ENCODE measurements at regions of chr6 and their contacts with region 1.

Region 1: GRCh38 chr6:24855395-24856245 is 56.9 kb upstream of the ARMH2 start:
- DNase-seq: peak; percentile 86
- ATAC-seq: peak; percentile 42
- H3K4me3 ChIP-seq: no peak overlapping the region
- H3K4me3 Mint-ChIP-seq: peak overlapping the region; percentile 46
- H3K27ac ChIP-seq: peak overlapping the region; percentile 60 to 80
- H3K27ac Mint-ChIP-seq: peak overlapping the region; percentile 97
- H3K4me1 ChIP-seq: peaks cover 62% of the 10 kb centered on the region in 2 donors
- H3K4me1 Mint-ChIP-seq: peaks cover 60% of the 10 kb centered on the region
- H3K27me3 ChIP-seq: no peaks in the 10 kb centered on the region
- H3K27me3 Mint-ChIP-seq: no peaks in the 10 kb centered on the region
- CTCF ChIP-seq: peak; percentile 86

Region 2: GRCh38 chr6:24666641-24667377 is 188.8 kb before region 1 on chr6 and contains the starts of genes ACOT13 and TDP2:
- CTCF ChIA-PET with region 1: no interaction called
- POLR2A ChIA-PET with region 1: no interaction called
- intact Hi-C with region 1: no loop called
- DNase-seq: peak; percentile 98
- ATAC-seq: peak; percentile 94
- H3K4me3 ChIP-seq: peak within 1 kb of the TSS; percentile 74 to 100 (median 96)
- H3K4me3 Mint-ChIP-seq: peak within 1 kb of the TSS; percentile 99
- H3K27ac ChIP-seq: peak within 1 kb of the TSS; percentile 75 to 82
- H3K27ac Mint-ChIP-seq: peak within 1 kb of the TSS; percentile 98
- H3K4me1 ChIP-seq: peaks cover 22 to 23% of the 10 kb centered on the region in 2 donors
- H3K4me1 Mint-ChIP-seq: peaks cover 46% of the 10 kb centered on the region
- H3K27me3 ChIP-seq: no peaks in the 10 kb centered on the region
- H3K27me3 Mint-ChIP-seq: no peaks in the 10 kb centered on the region
- CTCF ChIP-seq: peak; percentile 67
- total RNA-seq, gene ACOT13: 5.7 and 6.6 TPM in 2 replicates
- total RNA-seq, gene TDP2: 63.5 and 68.1 TPM in 2 replicates

Region 3: DNA sequence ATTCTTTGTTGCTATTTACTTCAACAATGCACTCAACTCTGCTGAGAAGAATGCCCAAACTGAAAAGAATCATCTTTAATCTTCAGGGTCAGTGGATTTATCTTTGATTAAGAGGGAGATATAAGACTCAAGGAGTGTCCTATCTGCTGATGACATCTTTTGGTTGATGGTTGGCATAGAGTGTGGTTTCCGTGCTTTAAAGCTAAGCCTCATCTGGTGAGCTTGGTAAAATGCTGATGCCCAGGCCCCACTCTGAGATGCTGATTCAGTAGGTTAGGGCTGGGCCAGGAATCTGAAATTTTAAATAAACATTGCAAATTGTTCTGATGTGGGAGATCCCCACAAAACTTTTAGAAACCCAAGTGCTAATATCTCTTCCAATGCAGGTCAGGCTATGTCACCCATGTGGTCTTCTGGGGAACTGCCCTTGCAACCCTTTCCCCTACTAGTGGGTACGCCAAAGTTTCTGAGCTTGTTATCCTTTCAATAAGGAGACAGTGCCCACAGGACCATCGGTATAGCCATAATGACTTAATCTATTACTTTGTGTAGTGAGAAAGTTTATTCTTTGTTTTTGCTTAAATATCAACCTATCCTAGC is 11.6 kb after region 1 on chr6:
- CTCF ChIA-PET with region 1: interaction called, 24 read pairs
- POLR2A ChIA-PET with region 1: no interaction called
- intact Hi-C with region 1: no loop called
- DNase-seq: no peak
- ATAC-seq: no peak
- H3K4me3 ChIP-seq: no peak overlapping the region
- H3K4me3 Mint-ChIP-seq: no peak overlapping the region
- H3K27ac ChIP-seq: peak overlapping the region in 1 of 2 donors; percentile 81
- H3K27ac Mint-ChIP-seq: peak overlapping the region; percentile 67
- H3K4me1 ChIP-seq: peaks cover 47 to 49% of the 10 kb centered on the region in 2 donors
- H3K4me1 Mint-ChIP-seq: peaks cover 58% of the 10 kb centered on the region
- H3K27me3 ChIP-seq: no peaks in the 10 kb centered on the region
- H3K27me3 Mint-ChIP-seq: no peaks in the 10 kb centered on the region
- CTCF ChIP-seq: no peak

Region 4: GRCh38 chr6:24891004-24891403 is 35.4 kb after region 1 on chr6:
- CTCF ChIA-PET with region 1: interaction called, 15 read pairs
- POLR2A ChIA-PET with region 1: no interaction called
- intact Hi-C with region 1: no loop called
- DNase-seq: no peak
- ATAC-seq: peak; percentile 28
- H3K4me3 ChIP-seq: no peak overlapping the region
- H3K4me3 Mint-ChIP-seq: peak overlapping the region; percentile 58
- H3K27ac ChIP-seq: peak overlapping the region in 1 of 2 donors; percentile 53
- H3K27ac Mint-ChIP-seq: peak overlapping the region; percentile 54
- H3K4me1 ChIP-seq: peaks cover 82 to 83% of the 10 kb centered on the region in 2 donors
- H3K4me1 Mint-ChIP-seq: peaks cover 88% of the 10 kb centered on the region
- H3K27me3 ChIP-seq: no peaks in the 10 kb centered on the region
- H3K27me3 Mint-ChIP-seq: no peaks in the 10 kb centered on the region
- CTCF ChIP-seq: no peak

Region 5: DNA sequence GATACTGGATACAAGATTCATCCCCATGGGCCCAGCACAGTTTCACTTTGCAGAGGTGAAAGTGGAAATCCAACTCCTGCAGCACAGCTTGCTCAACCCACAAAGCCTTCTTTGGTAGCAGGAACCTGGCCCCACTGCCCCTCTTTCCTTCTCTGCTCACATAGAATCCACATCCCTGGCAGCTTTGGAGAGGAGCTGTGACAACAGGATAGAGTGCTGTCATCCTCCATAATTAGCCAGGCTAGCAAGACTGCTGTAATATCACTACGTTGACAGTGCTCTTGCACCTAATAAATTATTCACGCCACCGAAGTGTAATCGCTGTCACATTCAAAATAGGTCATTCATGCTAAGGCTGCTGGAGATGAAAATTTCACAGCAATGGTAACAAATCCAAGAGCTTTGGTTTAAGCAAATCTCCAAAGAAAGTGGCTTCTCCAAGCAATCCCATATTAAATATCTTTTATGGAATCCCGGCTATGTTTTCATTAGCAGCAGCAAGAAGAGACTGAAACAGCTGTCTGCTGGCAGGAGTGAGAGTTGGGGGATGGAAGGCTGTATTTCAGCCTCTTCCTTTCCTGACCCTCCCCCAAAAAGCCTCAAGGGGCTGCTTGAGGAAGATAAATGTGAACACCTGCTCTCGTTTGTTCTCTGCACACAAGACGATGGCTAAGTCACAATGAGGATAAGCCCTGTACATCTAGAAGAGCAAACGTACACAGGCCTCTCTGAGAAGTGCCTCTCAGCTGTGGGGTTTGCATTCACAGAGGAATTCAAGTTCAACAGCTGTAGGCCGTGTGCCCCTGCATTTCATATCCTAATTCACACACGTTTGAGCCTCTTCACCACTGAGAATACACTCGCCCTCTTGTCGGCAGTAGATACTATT is 63.6 kb after region 1 on chr6:
- CTCF ChIA-PET with region 1: interaction called, 17 read pairs
- POLR2A ChIA-PET with region 1: no interaction called
- intact Hi-C with region 1: no loop called
- DNase-seq: peak; percentile 39
- ATAC-seq: peak; percentile 70
- H3K4me3 ChIP-seq: peak overlapping the region in 4 of 5 experiments; percentile 2 to 39 (median 16)
- H3K4me3 Mint-ChIP-seq: peak overlapping the region; percentile 84
- H3K27ac ChIP-seq: peak overlapping the region; percentile 36 to 68
- H3K27ac Mint-ChIP-seq: peak overlapping the region; percentile 92
- H3K4me1 ChIP-seq: peaks cover 95 to 99% of the 10 kb centered on the region in 2 donors
- H3K4me1 Mint-ChIP-seq: peaks cover 91% of the 10 kb centered on the region
- H3K27me3 ChIP-seq: no peaks in the 10 kb centered on the region
- H3K27me3 Mint-ChIP-seq: no peaks in the 10 kb centered on the region
- CTCF ChIP-seq: no peak

Region 6: GRCh38 chr6:25035527-25036435 is 180.2 kb after region 1 on chr6:
- CTCF ChIA-PET with region 1: interaction called, 25 read pairs
- POLR2A ChIA-PET with region 1: no interaction called
- intact Hi-C with region 1: no loop called
- DNase-seq: peak; percentile 50
- ATAC-seq: peak; percentile 57
- H3K4me3 ChIP-seq: peak overlapping the region in 4 of 5 experiments; percentile 28 to 65 (median 50)
- H3K4me3 Mint-ChIP-seq: peak overlapping the region; percentile 89
- H3K27ac ChIP-seq: peak overlapping the region; percentile 76 to 78
- H3K27ac Mint-ChIP-seq: peak overlapping the region; percentile 91
- H3K4me1 ChIP-seq: peaks cover 53 to 63% of the 10 kb centered on the region in 2 donors
- H3K4me1 Mint-ChIP-seq: peaks cover 66% of the 10 kb centered on the region
- H3K27me3 ChIP-seq: no peaks in the 10 kb centered on the region
- H3K27me3 Mint-ChIP-seq: no peaks in the 10 kb centered on the region
- CTCF ChIP-seq: no peak

Region 7: DNA sequence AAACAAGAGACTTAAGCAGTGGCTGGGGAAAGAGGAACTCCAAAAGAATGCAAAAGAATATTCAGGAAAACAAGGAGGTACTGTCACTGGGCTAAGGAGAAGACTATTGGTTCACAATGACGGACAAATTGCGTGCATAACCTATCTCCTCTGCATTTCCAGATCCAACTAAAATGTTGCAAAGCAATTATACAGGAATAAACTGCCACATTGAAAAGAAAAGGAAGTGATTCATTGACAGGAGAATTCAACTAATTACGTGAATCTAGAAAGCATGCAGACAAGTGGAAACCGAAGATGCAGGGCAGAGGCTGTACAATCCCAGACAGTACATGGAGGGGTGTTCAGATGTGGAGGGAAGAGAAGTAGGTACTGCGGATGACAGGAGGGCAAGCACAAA is 232.9 kb after region 1 on chr6:
- CTCF ChIA-PET with region 1: no interaction called
- POLR2A ChIA-PET with region 1: no interaction called
- intact Hi-C with region 1: no loop called
- DNase-seq: no peak
- ATAC-seq: no peak
- H3K4me3 ChIP-seq: no peak overlapping the region
- H3K4me3 Mint-ChIP-seq: no peak overlapping the region
- H3K27ac ChIP-seq: no peak overlapping the region
- H3K27ac Mint-ChIP-seq: no peak overlapping the region
- H3K4me1 ChIP-seq: peaks cover 22 to 23% of the 10 kb centered on the region in 2 donors
- H3K4me1 Mint-ChIP-seq: peaks cover 13% of the 10 kb centered on the region
- H3K27me3 ChIP-seq: no peaks in the 10 kb centered on the region
- H3K27me3 Mint-ChIP-seq: no peaks in the 10 kb centered on the region
- CTCF ChIP-seq: no peak